ENCODE measurements at regions of chr11 and their contacts with region 1.

Region 1: DNA sequence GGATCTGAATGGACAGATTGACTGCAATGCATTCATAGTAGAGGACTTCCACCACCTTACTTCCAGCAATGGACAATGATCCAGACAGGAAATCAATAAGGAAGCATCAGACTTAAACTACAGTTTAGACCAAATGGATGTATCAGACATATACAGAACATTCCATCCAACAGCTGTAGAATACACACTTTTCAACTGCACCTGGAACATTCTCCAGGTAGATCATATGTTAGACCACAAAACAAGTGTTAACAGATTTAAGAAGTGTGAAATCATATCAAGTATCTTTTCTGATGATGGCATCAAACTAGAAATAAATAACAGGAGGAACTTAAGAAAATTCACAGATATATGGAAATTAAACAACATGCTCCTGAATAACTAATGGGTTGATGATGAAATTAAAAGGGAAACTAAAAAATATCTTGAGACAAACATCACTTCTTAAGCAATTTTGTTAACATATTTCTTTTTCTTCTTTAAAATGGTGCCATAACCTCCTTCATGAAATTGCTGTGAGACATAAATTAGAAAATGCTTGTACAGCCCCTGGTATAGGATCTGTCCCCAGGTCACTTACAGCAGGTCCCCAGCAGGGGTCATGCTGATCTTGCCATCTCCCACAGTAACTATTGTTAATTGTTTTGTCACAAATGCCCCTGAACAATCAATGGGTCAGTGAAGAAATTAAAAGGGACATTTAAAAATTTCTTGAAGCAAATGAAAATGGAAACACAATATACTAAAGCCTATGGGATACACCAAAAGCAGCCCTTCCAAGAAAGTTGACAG is 100.0 kb upstream of the OR4B1 start:
- DNase-seq: no peak

Region 2: GRCh38 chr11:47979378-47980244 is 137.0 kb before region 1 on chr11:
- in situ Hi-C with region 1: loop called (anchors 10 kb)
- DNase-seq: peak; percentile 65

Measured in Caki2 (cell line).